ENCODE measurements at regions of chr7 and their contacts with region 1.

Region 1: DNA sequence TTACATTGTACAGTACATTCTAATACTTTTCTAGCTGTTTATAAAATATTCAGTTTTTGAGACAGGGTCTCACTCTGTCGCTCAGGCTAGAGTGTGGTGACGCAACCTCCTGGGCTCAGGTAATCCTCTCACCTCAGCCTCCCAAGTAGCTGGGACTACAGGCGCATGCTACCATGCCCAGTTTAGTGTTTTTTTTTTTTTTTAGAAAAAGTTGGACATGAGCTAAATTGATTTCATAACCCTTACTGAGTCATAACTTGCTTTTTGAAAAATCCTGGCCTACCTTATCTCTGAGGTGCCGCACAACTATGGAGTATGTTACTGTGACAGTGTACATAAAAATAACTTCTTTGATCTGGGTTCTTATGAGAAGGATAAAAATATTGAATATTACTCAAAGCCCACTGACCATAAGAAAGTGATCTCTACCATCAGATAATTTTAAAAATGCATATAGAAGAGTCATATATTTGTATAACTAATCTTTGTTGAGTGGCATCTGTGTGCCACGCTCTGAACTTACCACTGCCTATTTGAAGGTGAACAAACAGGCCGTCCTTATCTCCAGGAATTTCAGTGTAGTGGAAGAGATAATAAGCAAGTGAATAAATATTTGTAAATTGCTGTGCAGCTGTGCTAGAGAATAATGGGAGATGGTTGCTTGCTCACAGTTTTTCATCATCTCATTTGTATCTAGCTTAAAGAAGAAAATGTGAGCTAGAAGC is 73.2 kb downstream of the PPP1R9A start:
- DNase-seq: no peak
- ATAC-seq: no peak
- H3K4me3 ChIP-seq: no peak overlapping the region
- H3K27ac ChIP-seq: no peak overlapping the region
- H3K4me1 ChIP-seq: no peaks in the 10 kb centered on the region
- H3K27me3 ChIP-seq: no peaks in the 10 kb centered on the region
- CTCF ChIP-seq: no peak
- EP300 ChIP-seq: no peak
- POLR2A ChIP-seq: no peak
- RAD21 ChIP-seq: no peak

Region 2: GRCh38 chr7:94997547-94997946 is 17.0 kb after region 1 on chr7:
- CTCF ChIA-PET with region 1: no interaction called
- POLR2A ChIA-PET with region 1: no interaction called
- RAD21 ChIA-PET with region 1: no interaction called
- SMC1A ChIA-PET with region 1: interaction called, 20 read pairs
- in situ Hi-C with region 1: no loop called
- intact Hi-C with region 1: no loop called
- DNase-seq: no peak
- ATAC-seq: no peak
- H3K4me3 ChIP-seq: no peak overlapping the region
- H3K27ac ChIP-seq: no peak overlapping the region
- H3K4me1 ChIP-seq: no peaks in the 10 kb centered on the region
- H3K27me3 ChIP-seq: no peaks in the 10 kb centered on the region
- CTCF ChIP-seq: no peak
- EP300 ChIP-seq: no peak
- POLR2A ChIP-seq: no peak
- RAD21 ChIP-seq: no peak

Region 3: GRCh38 chr7:95421000-95421846 is 440.6 kb after region 1 on chr7:
- CTCF ChIA-PET with region 1: no interaction called
- POLR2A ChIA-PET with region 1: no interaction called
- RAD21 ChIA-PET with region 1: no interaction called
- SMC1A ChIA-PET with region 1: no interaction called
- in situ Hi-C with region 1: no loop called
- intact Hi-C with region 1: no loop called
- DNase-seq: no peak
- ATAC-seq: peak; percentile 83
- H3K4me3 ChIP-seq: no peak overlapping the region
- H3K27ac ChIP-seq: no peak overlapping the region
- H3K4me1 ChIP-seq: no peaks in the 10 kb centered on the region
- H3K27me3 ChIP-seq: no peaks in the 10 kb centered on the region
- CTCF ChIP-seq: no peak
- EP300 ChIP-seq: no peak
- POLR2A ChIP-seq: no peak
- RAD21 ChIP-seq: no peak